Esophagus muscularis mucosa (tissue), 4 donors: ENCODE measurements at regions of chr13 and their contacts with region 1.

Region 1: GRCh38 chr13:41061075-41061913 is at the start of gene WBP4:
- DNase-seq: peak; percentile 98
- H3K4me3 ChIP-seq: peak within 1 kb of the TSS; percentile 77 to 89 (median 82)
- H3K27ac ChIP-seq: peak within 1 kb of the TSS; percentile 95 to 99 (median 99)
- H3K4me1 ChIP-seq: peaks cover 54 to 73% (median 69%) of the 10 kb centered on the region in 4 donors
- H3K27me3 ChIP-seq: no peaks in the 10 kb centered on the region
- CTCF ChIP-seq: peak in 1 of 3 experiments; percentile 31
- EP300 ChIP-seq: no peak
- POLR2A ChIP-seq: peak; percentile 65
- total RNA-seq, gene WBP4: 15.3 to 23.2 (median 18.5) TPM

Region 2: GRCh38 chr13:40770934-40771618 is 290.2 kb before region 1 on chr13 and contains the start of gene MRPS31:
- intact Hi-C with region 1: loop called (anchors 10 kb)
- DNase-seq: peak; percentile 99
- H3K4me3 ChIP-seq: peak within 1 kb of the TSS; percentile 68 to 81 (median 74)
- H3K27ac ChIP-seq: peak within 1 kb of the TSS; percentile 78 to 89 (median 82)
- H3K4me1 ChIP-seq: peaks cover 0 to 23% (median 17%) of the 10 kb centered on the region in 4 donors
- H3K27me3 ChIP-seq: no peaks in the 10 kb centered on the region
- CTCF ChIP-seq: no peak
- EP300 ChIP-seq: no peak
- POLR2A ChIP-seq: no peak
- total RNA-seq, gene MRPS31: 9.9 to 14.6 (median 13.8) TPM

Region 3: GRCh38 chr13:40922437-40923040 is 138.8 kb before region 1 on chr13:
- intact Hi-C with region 1: loop called (anchors 5 kb)
- DNase-seq: no peak
- H3K4me3 ChIP-seq: no peak overlapping the region
- H3K27ac ChIP-seq: peak overlapping the region in 1 of 4 donors; percentile 2
- H3K4me1 ChIP-seq: peaks cover 9 to 18% (median 14%) of the 10 kb centered on the region in 4 donors
- H3K27me3 ChIP-seq: no peaks in the 10 kb centered on the region
- CTCF ChIP-seq: no peak
- EP300 ChIP-seq: no peak
- POLR2A ChIP-seq: no peak

Region 4: DNA sequence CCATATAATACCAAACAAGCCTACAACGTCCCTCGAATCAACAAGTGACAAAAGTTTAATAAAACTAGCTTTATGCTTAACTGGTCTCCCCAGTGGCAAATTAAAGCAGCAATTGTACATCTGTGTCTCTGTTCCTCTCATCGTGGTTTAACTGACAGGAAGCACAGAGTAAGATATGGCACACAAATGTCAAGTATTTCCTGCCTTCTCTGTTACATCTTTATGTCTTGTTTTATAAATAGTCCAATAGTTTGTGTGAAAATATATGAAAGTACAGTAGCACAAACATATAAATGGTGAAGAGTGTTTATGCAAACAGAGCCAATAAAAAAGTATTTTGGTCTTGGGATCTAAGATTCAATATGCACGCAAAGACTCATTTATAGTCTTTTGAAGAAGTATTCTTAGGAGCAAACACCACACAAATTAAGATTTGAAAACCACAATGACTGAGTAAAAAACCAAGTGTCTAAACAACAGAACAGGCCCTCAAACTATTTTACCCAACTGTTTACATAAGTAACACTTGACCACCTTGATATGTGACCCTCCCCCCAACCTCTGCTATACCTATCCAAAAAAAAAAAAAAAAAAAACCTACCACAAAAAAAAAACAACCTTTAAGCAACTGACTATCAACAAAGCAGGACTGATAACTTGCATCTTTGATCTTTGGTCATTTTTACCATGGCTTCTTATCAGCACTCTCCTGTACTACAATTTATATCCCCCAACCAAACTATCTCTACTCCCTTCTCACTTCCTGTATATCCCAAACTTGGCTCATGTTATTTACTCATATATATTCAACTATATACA is 56.2 kb before region 1 on chr13:
- intact Hi-C with region 1: no loop called
- DNase-seq: no peak
- H3K4me3 ChIP-seq: no peak overlapping the region
- H3K27ac ChIP-seq: no peak overlapping the region
- H3K4me1 ChIP-seq: peaks cover 18 to 24% (median 21%) of the 10 kb centered on the region in 4 donors
- H3K27me3 ChIP-seq: no peaks in the 10 kb centered on the region
- CTCF ChIP-seq: no peak
- EP300 ChIP-seq: no peak
- POLR2A ChIP-seq: no peak

Region 5: GRCh38 chr13:42039946-42040729 is 978.8 kb after region 1 on chr13:
- intact Hi-C with region 1: loop called (anchors 10 kb)
- DNase-seq: peak; percentile 98
- H3K4me3 ChIP-seq: peak overlapping the region; percentile 78 to 90 (median 88)
- H3K27ac ChIP-seq: peak overlapping the region; percentile 96 to 99 (median 98)
- H3K4me1 ChIP-seq: peaks cover 9 to 24% (median 23%) of the 10 kb centered on the region in 4 donors
- H3K27me3 ChIP-seq: no peaks in the 10 kb centered on the region
- CTCF ChIP-seq: peak in 1 of 3 experiments; percentile 21
- EP300 ChIP-seq: no peak
- POLR2A ChIP-seq: peak; percentile 63